GM12878 (cell line): ENCODE measurements at regions of chr5 and their contacts with region 1.

Region 1: DNA sequence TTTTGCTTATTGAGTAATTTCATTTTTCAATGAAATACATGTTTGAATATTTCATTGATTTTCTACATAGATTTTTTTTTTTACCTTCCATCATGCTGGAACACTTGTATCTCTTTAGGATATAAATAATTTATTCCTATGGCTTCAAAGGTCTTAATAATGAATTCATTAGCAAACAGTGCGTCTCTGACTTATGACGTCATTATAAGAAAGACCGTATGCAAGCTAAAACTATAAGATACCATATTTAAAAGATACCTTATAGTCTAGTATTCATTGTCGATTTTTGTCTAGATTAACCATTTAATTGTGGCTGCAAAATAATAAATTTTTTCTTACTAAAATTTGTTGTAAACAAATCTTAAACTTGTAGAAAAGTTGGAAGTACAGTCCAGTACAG is 187.7 kb upstream of the CHD1 start:
- DNase-seq: no peak
- ATAC-seq: no peak
- H3K4me3 ChIP-seq: no peak overlapping the region
- H3K27ac ChIP-seq: no peak overlapping the region
- H3K4me1 ChIP-seq: no peaks in the 10 kb centered on the region
- H3K27me3 ChIP-seq: no peaks in the 10 kb centered on the region
- CTCF ChIP-seq: no peak
- EP300 ChIP-seq: no peak
- POLR2A ChIP-seq: no peak
- RAD21 ChIP-seq: no peak

Region 2: GRCh38 chr5:99104538-99105132 is 11.9 kb before region 1 on chr5:
- CTCF ChIA-PET with region 1: interaction called, 38 read pairs
- POLR2A ChIA-PET with region 1: interaction called, 3 read pairs
- RAD21 ChIA-PET with region 1: interaction called, 3 read pairs
- SMC1A ChIA-PET with region 1: interaction called, 4 read pairs
- in situ Hi-C with region 1: no loop called
- intact Hi-C with region 1: no loop called
- DNase-seq: no peak
- ATAC-seq: peak; percentile 48
- H3K4me3 ChIP-seq: no peak overlapping the region
- H3K27ac ChIP-seq: no peak overlapping the region
- H3K4me1 ChIP-seq: no peaks in the 10 kb centered on the region
- H3K27me3 ChIP-seq: no peaks in the 10 kb centered on the region
- CTCF ChIP-seq: peak; percentile 39 to 54 (median 49); a peak in 5 of 6 replicates
- EP300 ChIP-seq: no peak
- POLR2A ChIP-seq: no peak
- RAD21 ChIP-seq: peak; percentile 70